ENCODE measurements at regions of chr15 and their contacts with region 1.

Region 1: GRCh38 chr15:68252925-68253534 is 23.5 kb upstream of the CLN6 start:
- DNase-seq: no peak

Region 2: GRCh38 chr15:68097029-68097428 is 156.0 kb before region 1 on chr15:
- intact Hi-C with region 1: no loop called
- DNase-seq: no peak

Region 3: DNA sequence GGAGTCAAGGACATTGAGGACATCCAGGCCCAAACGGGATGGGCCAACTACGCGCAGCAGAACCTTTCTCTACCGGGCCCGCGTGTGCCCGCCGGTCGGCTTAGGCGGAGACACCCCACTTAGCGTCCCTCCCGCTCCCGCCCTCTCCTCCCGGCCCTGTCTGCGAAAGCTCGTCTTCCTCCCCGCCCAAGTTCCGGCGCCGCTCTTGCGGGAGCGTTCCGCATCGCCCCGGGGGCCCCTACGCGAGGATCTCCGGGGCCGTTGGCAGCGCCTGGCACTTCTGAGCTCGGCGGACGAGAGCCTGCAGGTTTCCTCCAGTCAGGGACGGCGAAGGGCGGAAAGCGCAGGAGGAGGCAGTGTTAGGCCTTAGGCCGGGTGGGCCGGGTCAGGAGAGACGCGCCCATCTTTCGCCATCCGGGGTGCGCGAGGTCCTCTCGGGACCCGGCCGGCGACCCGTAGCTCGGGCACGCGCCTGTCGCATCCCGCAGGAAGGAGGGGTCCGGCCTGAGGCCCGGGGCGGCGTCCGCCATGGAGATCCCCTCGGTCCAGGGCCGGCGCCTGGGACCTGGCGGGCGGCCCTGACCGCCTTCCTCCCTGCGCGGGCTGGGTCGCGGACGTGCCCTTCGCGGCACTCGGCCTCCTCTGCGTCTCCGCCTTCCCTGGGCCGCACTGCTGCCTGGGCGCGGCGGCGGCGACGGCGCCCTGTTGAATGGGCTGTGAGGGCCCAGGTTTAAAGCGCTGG is 24.7 kb after region 1 on chr15 and contains the start of gene FEM1B:
- intact Hi-C with region 1: loop called (anchors 2 kb)
- DNase-seq: peak; percentile 95
- total RNA-seq, gene FEM1B: 114 TPM

Region 4: DNA sequence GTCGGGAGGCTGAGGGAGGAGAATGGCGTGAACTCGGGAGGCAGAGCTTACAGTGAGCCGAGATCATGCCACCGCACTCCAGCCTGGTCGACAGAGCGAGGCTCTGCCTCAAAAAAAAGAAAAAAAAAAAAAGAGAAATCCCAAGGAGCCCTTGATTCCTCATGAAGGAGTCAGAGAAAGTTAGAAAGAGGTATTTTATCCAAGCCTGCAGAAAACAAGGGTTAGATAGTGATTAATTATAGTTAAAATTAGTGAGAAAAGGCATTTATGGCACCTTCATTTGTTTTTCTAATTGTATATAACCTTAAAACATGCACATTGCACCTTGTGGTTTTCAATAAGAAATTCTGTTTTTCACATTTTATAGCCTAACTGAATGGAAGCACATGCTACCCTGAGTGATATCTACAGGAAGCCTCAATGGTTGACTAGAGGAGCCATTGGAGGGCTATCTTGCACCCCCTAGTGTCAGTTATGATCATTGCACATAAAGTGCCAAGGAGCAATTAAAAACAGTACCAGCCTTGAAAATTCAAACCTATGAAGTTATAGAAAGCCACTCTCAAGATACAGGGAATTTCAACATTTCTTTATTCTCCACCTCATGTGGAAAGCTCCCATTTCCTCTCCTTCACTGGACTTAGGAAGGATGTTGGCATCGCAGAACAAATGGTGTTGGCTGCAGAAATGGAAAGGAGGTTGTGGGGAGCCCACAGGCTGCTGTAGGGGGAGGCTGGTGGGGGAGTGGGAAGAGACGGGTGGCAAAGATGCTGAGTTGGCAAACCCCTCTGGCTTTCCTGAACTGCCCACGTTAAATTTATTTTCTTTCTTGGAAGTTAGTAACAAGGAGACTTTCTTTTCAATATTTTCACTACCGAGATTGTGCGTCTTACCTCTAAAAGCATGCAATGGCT is 130.4 kb after region 1 on chr15:
- intact Hi-C with region 1: loop called (anchors 5 kb)
- DNase-seq: peak; percentile 27

Measured in cardiac septum (tissue), 1 donor.